ENCODE measurements at regions of chr22 and their contacts with region 1.

Region 1: GRCh38 chr22:41517172-41518047 is 26.9 kb downstream of the POLR3H start:
- DNase-seq: peak; percentile 64
- H3K4me3 ChIP-seq: no peak overlapping the region
- H3K27ac ChIP-seq: no peak overlapping the region
- H3K4me1 ChIP-seq: peaks cover 3% of the 10 kb centered on the region
- H3K27me3 ChIP-seq: no peaks in the 10 kb centered on the region
- CTCF ChIP-seq: peak; percentile 80 to 89
- POLR2A ChIP-seq: no peak

Region 2: GRCh38 chr22:41327124-41327523 is 190.3 kb before region 1 on chr22:
- CTCF ChIA-PET with region 1: no interaction called
- POLR2A ChIA-PET with region 1: no interaction called
- dilution Hi-C with region 1: no loop called
- intact Hi-C with region 1: no loop called
- DNase-seq: no peak
- H3K4me3 ChIP-seq: no peak overlapping the region
- H3K27ac ChIP-seq: no peak overlapping the region
- H3K4me1 ChIP-seq: peaks cover 10% of the 10 kb centered on the region
- H3K27me3 ChIP-seq: no peaks in the 10 kb centered on the region
- CTCF ChIP-seq: no peak
- POLR2A ChIP-seq: no peak

Region 3: GRCh38 chr22:41448189-41448808 is 69.1 kb before region 1 on chr22:
- CTCF ChIA-PET with region 1: interaction called, 12 read pairs
- POLR2A ChIA-PET with region 1: interaction called, 3 read pairs
- dilution Hi-C with region 1: no loop called
- intact Hi-C with region 1: no loop called
- DNase-seq: peak; percentile 100
- H3K4me3 ChIP-seq: peak overlapping the region; percentile 83 to 96 (median 95)
- H3K27ac ChIP-seq: peak overlapping the region; percentile 83
- H3K4me1 ChIP-seq: peaks cover 4% of the 10 kb centered on the region
- H3K27me3 ChIP-seq: no peaks in the 10 kb centered on the region
- CTCF ChIP-seq: no peak
- POLR2A ChIP-seq: peak; percentile 19

Region 4: DNA sequence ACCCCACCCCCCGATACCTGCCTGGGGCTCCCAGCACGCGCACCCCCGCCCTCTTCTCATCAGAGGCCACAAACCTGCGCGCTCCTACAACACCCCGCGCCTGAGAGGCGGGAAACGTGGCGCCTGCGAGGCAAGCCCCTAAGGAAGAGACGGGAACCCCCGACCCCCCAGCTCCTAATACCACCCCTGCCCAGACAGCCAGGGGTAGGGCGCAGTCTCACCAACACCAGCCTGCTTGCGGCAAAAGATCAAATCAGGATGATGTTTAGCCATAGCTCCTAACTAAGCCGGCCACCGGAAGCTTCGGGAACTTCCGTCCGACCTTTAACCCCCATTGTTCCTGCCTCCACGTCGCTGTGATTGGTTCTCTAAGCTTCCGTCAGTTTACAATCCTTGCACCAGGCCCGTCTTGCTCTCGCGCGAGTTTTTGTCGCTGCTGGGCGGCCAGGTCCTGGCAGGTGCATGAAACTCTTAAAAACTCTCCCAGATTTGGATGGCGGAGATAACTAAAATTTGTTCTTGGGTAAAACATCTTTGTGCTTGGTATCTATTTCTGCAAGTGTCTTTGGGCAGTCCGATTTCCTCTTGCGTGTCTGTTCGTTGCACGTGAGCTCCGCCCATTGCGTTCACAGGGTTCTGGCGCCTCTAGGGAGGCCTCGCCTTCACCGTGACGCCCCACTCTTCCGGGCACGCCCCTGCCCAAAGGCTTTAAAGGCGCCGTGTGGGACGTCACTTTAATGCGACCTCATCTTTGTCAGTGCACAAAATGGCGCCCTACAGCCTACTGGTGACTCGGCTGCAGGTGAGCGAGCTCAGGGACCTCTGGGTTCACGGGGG is 48.8 kb before region 1 on chr22 and contains the starts of genes ACO2 and PHF5A:
- CTCF ChIA-PET with region 1: interaction called, 9 read pairs
- POLR2A ChIA-PET with region 1: no interaction called
- dilution Hi-C with region 1: no loop called
- intact Hi-C with region 1: loop called (anchors 1 kb)
- DNase-seq: peak; percentile 99
- H3K4me3 ChIP-seq: peak within 1 kb of the TSS; percentile 78 to 96 (median 81)
- H3K27ac ChIP-seq: peak within 1 kb of the TSS; percentile 83
- H3K4me1 ChIP-seq: peaks cover 17% of the 10 kb centered on the region
- H3K27me3 ChIP-seq: no peaks in the 10 kb centered on the region
- CTCF ChIP-seq: no peak
- POLR2A ChIP-seq: peak; percentile 64
- total RNA-seq, gene ACO2: 79.1 and 79.7 TPM in 2 replicates
- total RNA-seq, gene PHF5A: 55.9 and 63.7 TPM in 2 replicates

Region 5: GRCh38 chr22:41501209-41501608 is 16.2 kb before region 1 on chr22:
- CTCF ChIA-PET with region 1: interaction called, 12 read pairs
- POLR2A ChIA-PET with region 1: no interaction called
- dilution Hi-C with region 1: no loop called
- intact Hi-C with region 1: no loop called
- DNase-seq: peak; percentile 16
- H3K4me3 ChIP-seq: no peak overlapping the region
- H3K27ac ChIP-seq: no peak overlapping the region
- H3K4me1 ChIP-seq: no peaks in the 10 kb centered on the region
- H3K27me3 ChIP-seq: no peaks in the 10 kb centered on the region
- CTCF ChIP-seq: peak in 1 of 2 donors; percentile 25
- POLR2A ChIP-seq: no peak